Left ventricle myocardium inferior (tissue), 1 donor: ENCODE measurements at regions of chr2 and their contacts with region 1.

Region 1: GRCh38 chr2:98385050-98385699 is 38.9 kb downstream of the CNGA3 start:
- DNase-seq: peak; percentile 71
- H3K4me3 ChIP-seq: no peak overlapping the region
- H3K27ac ChIP-seq: no peak overlapping the region
- H3K4me1 ChIP-seq: no peaks in the 10 kb centered on the region
- H3K27me3 ChIP-seq: peaks cover 12% of the 10 kb centered on the region
- CTCF ChIP-seq: peak; percentile 91

Region 2: GRCh38 chr2:97806738-97807618 is 578.2 kb before region 1 on chr2:
- intact Hi-C with region 1: loop called (anchors 10 kb)
- DNase-seq: peak; percentile 81
- H3K4me3 ChIP-seq: no peak overlapping the region
- H3K27ac ChIP-seq: no peak overlapping the region
- H3K4me1 ChIP-seq: peaks cover 12% of the 10 kb centered on the region
- H3K27me3 ChIP-seq: no peaks in the 10 kb centered on the region
- CTCF ChIP-seq: peak; percentile 96

Region 3: GRCh38 chr2:98923244-98923940 is 538.2 kb after region 1 on chr2:
- intact Hi-C with region 1: no loop called
- DNase-seq: no peak
- H3K4me3 ChIP-seq: no peak overlapping the region
- H3K27ac ChIP-seq: no peak overlapping the region
- H3K4me1 ChIP-seq: no peaks in the 10 kb centered on the region
- H3K27me3 ChIP-seq: peaks cover 60% of the 10 kb centered on the region
- CTCF ChIP-seq: no peak